PC-3 (cell line): ENCODE measurements at regions of chr21 and their contacts with region 1.

Region 1: GRCh38 chr21:26715878-26716506 is 129.2 kb downstream of the ADAMTS1 start:
- DNase-seq: peak; percentile 80
- ATAC-seq: peak; percentile 82
- H3K4me3 ChIP-seq: peak overlapping the region; percentile 51
- H3K27ac ChIP-seq: no peak overlapping the region
- H3K4me1 ChIP-seq: peaks cover 13% of the 10 kb centered on the region; the same call in 1 of the 2 replicates
- H3K27me3 ChIP-seq: no peaks in the 10 kb centered on the region
- CTCF ChIP-seq: peak; percentile 90

Region 2: DNA sequence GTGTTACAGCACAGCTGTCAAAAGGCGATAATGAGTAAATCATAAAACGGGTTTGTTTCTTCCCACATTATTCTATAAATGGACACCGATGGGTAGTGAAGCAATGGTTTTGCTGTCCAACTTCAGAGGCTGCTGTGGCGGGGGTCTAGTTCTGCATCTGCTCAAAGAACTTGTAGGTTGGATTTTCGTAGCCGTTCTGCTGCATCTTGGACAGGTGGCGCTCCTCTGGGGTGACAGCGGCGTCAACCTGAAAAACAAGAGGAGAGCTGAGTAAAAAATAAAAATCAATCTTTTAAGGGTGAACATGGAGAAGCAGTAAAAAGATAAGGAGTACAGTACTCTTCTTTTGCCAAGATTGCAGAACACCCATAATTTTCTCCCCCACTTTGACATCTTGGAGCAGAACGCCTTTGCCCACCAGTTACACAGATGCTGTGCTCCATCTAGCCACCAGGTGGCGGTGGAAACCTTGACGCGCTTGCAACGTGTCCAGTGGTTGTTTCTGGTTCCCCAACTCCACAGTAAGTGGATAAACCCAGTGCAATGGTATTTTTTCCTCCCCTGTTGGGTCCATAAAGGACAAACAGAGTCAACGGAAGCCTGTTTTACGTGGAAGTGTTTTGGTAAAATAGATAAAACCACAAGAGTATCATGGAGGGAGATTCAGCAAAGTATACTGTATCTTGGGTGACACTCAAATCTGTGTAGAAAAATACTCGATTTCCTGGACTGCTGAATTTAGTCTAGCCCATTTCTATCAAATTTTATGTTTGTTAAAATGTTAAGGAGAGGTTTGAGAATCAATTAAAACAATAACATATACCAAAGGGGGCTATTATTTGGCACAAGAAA is 834.2 kb before region 1 on chr21:
- CTCF ChIA-PET with region 1: no interaction called
- POLR2A ChIA-PET with region 1: no interaction called
- intact Hi-C with region 1: loop called (anchors 5 kb)
- DNase-seq: peak; percentile 73
- ATAC-seq: peak; percentile 37
- H3K4me3 ChIP-seq: no peak overlapping the region
- H3K27ac ChIP-seq: no peak overlapping the region
- H3K4me1 ChIP-seq: peaks cover 34% of the 10 kb centered on the region
- H3K27me3 ChIP-seq: no peaks in the 10 kb centered on the region
- CTCF ChIP-seq: peak; percentile 98

Region 3: DNA sequence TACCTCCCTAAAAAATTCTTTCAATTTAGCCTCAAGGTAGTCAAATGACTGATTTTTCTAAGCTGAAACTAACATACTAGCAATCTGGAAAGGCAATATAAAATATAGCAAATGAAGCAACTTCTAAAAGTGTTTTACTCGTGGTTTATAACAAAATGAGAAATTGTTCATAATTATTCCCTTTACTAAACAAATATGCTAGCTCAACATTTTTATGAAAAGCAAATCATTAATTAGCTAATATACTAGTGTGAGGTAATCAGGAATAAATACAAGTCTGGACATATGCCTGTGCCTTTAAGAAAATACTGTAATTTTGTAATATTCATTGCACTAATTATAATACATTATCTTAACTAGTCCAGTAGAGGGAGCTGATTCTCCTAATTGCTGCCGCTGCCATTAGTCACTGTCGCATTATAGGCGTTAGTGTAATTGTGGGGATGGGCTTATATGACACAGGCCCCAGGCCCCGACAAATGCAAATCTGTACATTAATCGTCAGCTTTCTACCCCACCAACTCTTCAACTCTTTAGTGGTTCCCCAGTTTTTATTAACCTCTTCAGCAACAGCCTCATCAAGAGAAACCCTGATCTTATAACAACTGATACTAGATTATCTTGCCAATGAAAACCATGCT is 820.3 kb before region 1 on chr21:
- CTCF ChIA-PET with region 1: no interaction called
- POLR2A ChIA-PET with region 1: no interaction called
- intact Hi-C with region 1: loop called (anchors 5 kb)
- DNase-seq: peak; percentile 53
- ATAC-seq: peak; percentile 57; the same call in 1 of the 2 replicates
- H3K4me3 ChIP-seq: no peak overlapping the region
- H3K27ac ChIP-seq: no peak overlapping the region
- H3K4me1 ChIP-seq: no peaks in the 10 kb centered on the region
- H3K27me3 ChIP-seq: no peaks in the 10 kb centered on the region
- CTCF ChIP-seq: peak; percentile 80

Region 4: DNA sequence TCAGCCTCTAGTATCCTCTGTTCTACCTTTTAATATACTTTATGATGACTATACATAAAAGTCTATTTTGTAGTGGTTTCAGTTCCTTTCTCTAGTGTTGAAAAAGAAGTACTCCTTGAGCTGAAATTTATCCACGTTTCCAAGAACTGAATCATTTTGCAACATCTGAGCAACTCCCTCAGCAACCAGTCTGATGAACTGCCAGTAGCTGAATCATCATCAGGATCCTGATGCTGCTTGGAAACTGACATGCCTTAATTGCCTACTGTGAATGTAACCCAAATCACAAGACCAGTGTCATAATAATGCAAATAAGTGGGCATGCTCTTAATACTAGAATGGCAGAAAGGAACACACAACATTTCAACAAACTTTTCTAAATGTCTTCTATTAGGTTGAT is 246.2 kb before region 1 on chr21:
- CTCF ChIA-PET with region 1: no interaction called
- POLR2A ChIA-PET with region 1: no interaction called
- intact Hi-C with region 1: loop called (anchors 10 kb)
- DNase-seq: peak; percentile 71
- ATAC-seq: peak; percentile 98
- H3K4me3 ChIP-seq: no peak overlapping the region
- H3K27ac ChIP-seq: no peak overlapping the region
- H3K4me1 ChIP-seq: no peaks in the 10 kb centered on the region; the same call in 1 of the 2 replicates
- H3K27me3 ChIP-seq: no peaks in the 10 kb centered on the region
- CTCF ChIP-seq: no peak

Region 5: DNA sequence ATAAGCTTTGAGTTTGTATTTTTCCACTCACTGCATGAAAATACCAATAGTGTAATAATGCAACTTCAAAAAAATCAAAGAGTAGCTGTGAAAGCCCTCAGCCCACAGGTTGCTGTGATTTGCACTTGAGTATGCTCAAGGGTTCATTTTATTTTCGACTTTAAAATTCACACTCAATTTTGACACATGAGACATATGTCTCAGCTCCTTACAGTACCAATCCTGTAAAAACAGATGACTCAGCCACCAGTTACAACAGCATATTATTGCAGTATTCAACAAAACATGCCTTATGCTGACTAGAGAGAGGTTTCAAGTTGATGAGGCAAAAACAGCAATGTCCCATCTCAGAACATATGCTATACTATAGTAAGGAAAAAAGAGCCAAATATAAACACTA is 209.0 kb before region 1 on chr21:
- CTCF ChIA-PET with region 1: no interaction called
- POLR2A ChIA-PET with region 1: no interaction called
- intact Hi-C with region 1: loop called (anchors 5 kb)
- DNase-seq: peak; percentile 80
- ATAC-seq: peak; percentile 100
- H3K4me3 ChIP-seq: no peak overlapping the region
- H3K27ac ChIP-seq: no peak overlapping the region
- H3K4me1 ChIP-seq: peaks cover 8% of the 10 kb centered on the region
- H3K27me3 ChIP-seq: no peaks in the 10 kb centered on the region
- CTCF ChIP-seq: no peak

Region 6: DNA sequence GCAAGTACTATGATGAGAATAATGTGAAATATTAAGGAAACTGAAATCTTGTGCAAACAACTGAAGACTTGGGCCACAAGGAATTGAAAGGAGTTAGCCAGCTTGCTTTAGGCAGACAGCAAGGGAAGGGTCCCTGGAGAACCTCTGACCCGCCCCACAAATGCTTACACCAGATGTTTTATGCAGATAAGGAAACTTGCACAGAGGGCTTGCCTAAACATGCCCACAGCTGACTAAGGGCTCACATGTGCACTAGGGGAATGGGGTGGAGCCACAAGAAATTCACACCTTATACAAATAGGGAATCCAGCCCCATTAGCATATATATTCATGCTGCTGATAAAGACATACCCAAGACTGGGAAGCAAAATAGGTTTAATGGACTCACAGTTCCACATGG is 56.8 kb before region 1 on chr21:
- CTCF ChIA-PET with region 1: no interaction called
- POLR2A ChIA-PET with region 1: no interaction called
- intact Hi-C with region 1: no loop called
- DNase-seq: no peak
- ATAC-seq: no peak
- H3K4me3 ChIP-seq: no peak overlapping the region
- H3K27ac ChIP-seq: no peak overlapping the region
- H3K4me1 ChIP-seq: peaks cover 5% of the 10 kb centered on the region; the same call in 1 of the 2 replicates
- H3K27me3 ChIP-seq: no peaks in the 10 kb centered on the region
- CTCF ChIP-seq: no peak

Region 7: DNA sequence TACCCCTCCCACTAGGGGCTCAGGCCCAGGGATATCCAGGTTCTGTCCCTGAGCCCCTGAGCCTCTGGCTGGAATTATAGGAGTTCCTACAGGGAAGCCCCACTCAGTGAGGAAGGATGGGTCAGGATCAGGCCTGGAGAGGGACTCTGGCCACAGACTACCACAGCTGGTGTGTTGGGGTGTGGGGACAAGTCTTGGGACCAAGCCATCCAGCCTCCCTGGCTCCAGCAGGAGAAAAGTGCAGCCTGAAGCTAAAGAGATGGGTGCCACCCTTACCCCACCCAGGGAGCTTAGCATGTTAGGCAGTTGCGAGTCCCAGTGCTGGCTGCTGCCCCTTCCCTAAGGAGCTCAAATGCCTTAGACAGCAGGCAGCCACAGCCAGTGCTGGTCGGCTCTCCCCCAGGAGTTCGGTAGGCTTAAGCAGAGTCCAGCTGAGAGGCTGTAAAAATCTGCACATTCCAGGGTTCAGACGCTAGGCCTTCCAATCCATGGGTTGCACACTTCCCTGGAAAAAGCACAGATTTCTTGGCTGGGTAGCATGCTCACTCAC is 46.7 kb before region 1 on chr21:
- CTCF ChIA-PET with region 1: no interaction called
- POLR2A ChIA-PET with region 1: no interaction called
- intact Hi-C with region 1: no loop called
- DNase-seq: no peak
- ATAC-seq: no peak
- H3K4me3 ChIP-seq: no peak overlapping the region
- H3K27ac ChIP-seq: no peak overlapping the region
- H3K4me1 ChIP-seq: no peaks in the 10 kb centered on the region
- H3K27me3 ChIP-seq: no peaks in the 10 kb centered on the region
- CTCF ChIP-seq: no peak